CD4-positive, alpha-beta memory T cell (primary cell): ENCODE measurements at regions of chr6 and their contacts with region 1.

Region 1: GRCh38 chr6:131532580-131533039 is 40.4 kb upstream of the ARG1 start:
- DNase-seq: no peak
- H3K4me3 ChIP-seq: no peak overlapping the region
- H3K4me3 Mint-ChIP-seq: peak overlapping the region in 4 of 8 donors; percentile 2 to 52 (median 39)
- H3K27ac ChIP-seq: no peak overlapping the region
- H3K27ac Mint-ChIP-seq: peak overlapping the region in 5 of 7 donors; percentile 7 to 74 (median 55)
- H3K4me1 ChIP-seq: peaks cover 19% of the 10 kb centered on the region
- H3K4me1 Mint-ChIP-seq: peaks cover 31 to 55% (median 44%) of the 10 kb centered on the region in 4 donors
- H3K27me3 ChIP-seq: no peaks in the 10 kb centered on the region
- H3K27me3 Mint-ChIP-seq: peaks cover 0 to 5% of the 10 kb centered on the region in 2 donors

Region 2: GRCh38 chr6:129936329-129937165 is 1596.1 kb before region 1 on chr6:
- CTCF ChIA-PET with region 1: no interaction called
- POLR2A ChIA-PET with region 1: no interaction called
- intact Hi-C with region 1: no loop called
- DNase-seq: peak in 4 of 5 donors; percentile 25 to 39 (median 34)
- H3K4me3 ChIP-seq: no peak overlapping the region
- H3K4me3 Mint-ChIP-seq: peak overlapping the region in 2 of 8 donors; percentile 38 to 79
- H3K27ac ChIP-seq: no peak overlapping the region
- H3K27ac Mint-ChIP-seq: no peak overlapping the region
- H3K4me1 ChIP-seq: no peaks in the 10 kb centered on the region
- H3K4me1 Mint-ChIP-seq: peaks cover 0 to 4% (median 1%) of the 10 kb centered on the region in 4 donors
- H3K27me3 ChIP-seq: peaks cover 4% of the 10 kb centered on the region
- H3K27me3 Mint-ChIP-seq: peaks cover 11 to 15% of the 10 kb centered on the region in 2 donors

Region 3: GRCh38 chr6:131116749-131117360 is 415.8 kb before region 1 on chr6:
- CTCF ChIA-PET with region 1: interaction called, 16 read pairs
- POLR2A ChIA-PET with region 1: interaction called, 3 read pairs
- intact Hi-C with region 1: loop called (anchors 1 kb)
- DNase-seq: peak in 4 of 5 donors; percentile 37 to 51 (median 48)
- H3K4me3 ChIP-seq: no peak overlapping the region
- H3K4me3 Mint-ChIP-seq: no peak overlapping the region
- H3K27ac ChIP-seq: no peak overlapping the region
- H3K27ac Mint-ChIP-seq: no peak overlapping the region
- H3K4me1 ChIP-seq: no peaks in the 10 kb centered on the region
- H3K4me1 Mint-ChIP-seq: no peaks in the 10 kb centered on the region
- H3K27me3 ChIP-seq: no peaks in the 10 kb centered on the region
- H3K27me3 Mint-ChIP-seq: peaks cover 0 to 2% of the 10 kb centered on the region in 2 donors

Region 4: GRCh38 chr6:131182991-131183425 is 349.6 kb before region 1 on chr6:
- CTCF ChIA-PET with region 1: interaction called, 220 read pairs
- POLR2A ChIA-PET with region 1: interaction called, 21 read pairs
- intact Hi-C with region 1: loop called (anchors 1 kb)
- DNase-seq: peak; percentile 43 to 57 (median 53)
- H3K4me3 ChIP-seq: peak overlapping the region in 1 of 2 donors; percentile 36
- H3K4me3 Mint-ChIP-seq: peak overlapping the region in 7 of 8 donors; percentile 52 to 90 (median 69)
- H3K27ac ChIP-seq: no peak overlapping the region
- H3K27ac Mint-ChIP-seq: peak overlapping the region; percentile 25 to 96 (median 88)
- H3K4me1 ChIP-seq: peaks cover 10% of the 10 kb centered on the region
- H3K4me1 Mint-ChIP-seq: peaks cover 6 to 18% (median 11%) of the 10 kb centered on the region in 4 donors
- H3K27me3 ChIP-seq: no peaks in the 10 kb centered on the region
- H3K27me3 Mint-ChIP-seq: no peaks in the 10 kb centered on the region

Region 5: GRCh38 chr6:131205481-131206244 is 326.9 kb before region 1 on chr6:
- CTCF ChIA-PET with region 1: interaction called, 62 read pairs
- POLR2A ChIA-PET with region 1: interaction called, 87 read pairs
- intact Hi-C with region 1: no loop called
- DNase-seq: peak in 1 of 5 donors; percentile 12
- H3K4me3 ChIP-seq: no peak overlapping the region
- H3K4me3 Mint-ChIP-seq: peak overlapping the region in 3 of 8 donors; percentile 20 to 47 (median 31)
- H3K27ac ChIP-seq: no peak overlapping the region
- H3K27ac Mint-ChIP-seq: peak overlapping the region; percentile 11 to 67 (median 32)
- H3K4me1 ChIP-seq: peaks cover 50% of the 10 kb centered on the region
- H3K4me1 Mint-ChIP-seq: peaks cover 47 to 66% (median 56%) of the 10 kb centered on the region in 4 donors
- H3K27me3 ChIP-seq: no peaks in the 10 kb centered on the region
- H3K27me3 Mint-ChIP-seq: no peaks in the 10 kb centered on the region

Region 6: GRCh38 chr6:131519670-131520436 is 12.8 kb before region 1 on chr6:
- CTCF ChIA-PET with region 1: interaction called, 56 read pairs
- POLR2A ChIA-PET with region 1: interaction called, 17 read pairs
- intact Hi-C with region 1: loop called (anchors 1 kb)
- DNase-seq: peak; percentile 45 to 51 (median 49)
- H3K4me3 ChIP-seq: no peak overlapping the region
- H3K4me3 Mint-ChIP-seq: peak overlapping the region in 1 of 8 donors; percentile 47
- H3K27ac ChIP-seq: no peak overlapping the region
- H3K27ac Mint-ChIP-seq: peak overlapping the region in 3 of 7 donors; percentile 8 to 44 (median 33)
- H3K4me1 ChIP-seq: peaks cover 10% of the 10 kb centered on the region
- H3K4me1 Mint-ChIP-seq: peaks cover 10 to 25% (median 18%) of the 10 kb centered on the region in 4 donors
- H3K27me3 ChIP-seq: no peaks in the 10 kb centered on the region
- H3K27me3 Mint-ChIP-seq: peaks cover 0 to 2% of the 10 kb centered on the region in 2 donors

Region 7: DNA sequence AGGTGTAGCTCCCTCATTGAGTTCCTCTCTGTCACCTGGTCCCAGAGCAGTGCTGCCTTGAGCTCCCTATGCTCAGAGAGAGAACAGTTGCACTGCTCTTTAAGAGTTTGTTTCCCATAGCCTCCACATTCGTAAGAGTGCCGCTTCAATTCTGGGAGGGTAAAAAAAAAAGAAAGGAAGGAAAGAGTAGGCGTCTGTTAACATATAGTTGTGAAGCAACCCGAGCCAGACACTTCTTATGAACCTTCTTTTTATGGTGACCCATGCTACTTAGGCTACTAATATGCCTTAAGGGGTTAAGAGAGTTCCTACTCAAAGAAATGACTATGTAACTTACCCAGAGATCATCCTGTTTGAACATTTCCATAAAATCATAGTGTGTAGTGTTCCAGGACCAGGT is 36.1 kb after region 1 on chr6:
- CTCF ChIA-PET with region 1: interaction called, 16 read pairs
- POLR2A ChIA-PET with region 1: no interaction called
- intact Hi-C with region 1: no loop called
- DNase-seq: no peak
- H3K4me3 ChIP-seq: no peak overlapping the region
- H3K4me3 Mint-ChIP-seq: no peak overlapping the region
- H3K27ac ChIP-seq: no peak overlapping the region
- H3K27ac Mint-ChIP-seq: no peak overlapping the region
- H3K4me1 ChIP-seq: no peaks in the 10 kb centered on the region
- H3K4me1 Mint-ChIP-seq: peaks cover 0 to 9% (median 2%) of the 10 kb centered on the region in 4 donors
- H3K27me3 ChIP-seq: no peaks in the 10 kb centered on the region
- H3K27me3 Mint-ChIP-seq: no peaks in the 10 kb centered on the region